Activated CD4-positive, alpha-beta T cell treated with anti-CD3 and anti-CD28 coated beads, Interleukin-2, amount 10 ng/mL, durations not matched to agents 24 days and 14 days (primary cell): ENCODE measurements at regions of chr3 and their contacts with region 1.

Region 1: DNA sequence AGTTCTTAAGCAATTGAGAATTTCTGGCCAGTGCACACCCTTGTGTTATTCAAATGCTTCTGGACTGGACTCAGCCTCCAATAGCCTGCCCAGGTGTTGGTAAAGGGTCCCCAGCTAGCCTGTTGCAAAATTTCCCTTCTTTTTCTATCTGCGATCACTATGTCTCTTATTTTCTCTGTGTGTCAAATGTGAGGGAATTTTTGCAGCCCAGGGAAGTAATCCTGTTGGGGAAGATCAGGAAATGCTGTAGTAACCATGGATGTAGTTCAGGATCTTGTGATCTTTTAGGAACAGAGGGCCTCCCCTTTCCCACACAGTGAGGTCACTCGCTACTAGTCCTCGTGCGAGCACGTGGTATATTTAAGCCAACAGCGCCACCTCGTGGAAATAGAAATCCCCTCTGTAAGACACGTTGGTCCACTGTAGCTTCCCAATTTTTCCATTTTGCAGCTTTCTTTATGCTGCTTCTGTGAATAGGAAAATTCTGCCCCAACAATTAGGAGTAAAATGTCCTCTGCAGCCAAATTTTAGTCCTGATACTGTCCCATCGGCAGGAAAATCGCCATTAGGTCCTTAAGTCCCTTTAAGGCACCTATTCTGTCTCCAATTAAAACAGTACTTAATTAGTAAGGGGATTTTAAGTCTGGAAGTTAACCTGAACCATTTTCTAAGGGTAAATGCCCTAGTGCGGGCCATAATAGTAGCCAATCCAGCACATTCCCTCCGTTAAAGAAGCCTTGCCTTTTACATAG is 4.0 kb upstream of the SMCO1 start:
- DNase-seq: peak; percentile 89
- H3K4me3 Mint-ChIP-seq: no peak overlapping the region
- H3K27ac Mint-ChIP-seq: no peak overlapping the region
- H3K4me1 Mint-ChIP-seq: peaks cover 2% of the 10 kb centered on the region
- H3K27me3 Mint-ChIP-seq: peaks cover 1% of the 10 kb centered on the region

Region 2: DNA sequence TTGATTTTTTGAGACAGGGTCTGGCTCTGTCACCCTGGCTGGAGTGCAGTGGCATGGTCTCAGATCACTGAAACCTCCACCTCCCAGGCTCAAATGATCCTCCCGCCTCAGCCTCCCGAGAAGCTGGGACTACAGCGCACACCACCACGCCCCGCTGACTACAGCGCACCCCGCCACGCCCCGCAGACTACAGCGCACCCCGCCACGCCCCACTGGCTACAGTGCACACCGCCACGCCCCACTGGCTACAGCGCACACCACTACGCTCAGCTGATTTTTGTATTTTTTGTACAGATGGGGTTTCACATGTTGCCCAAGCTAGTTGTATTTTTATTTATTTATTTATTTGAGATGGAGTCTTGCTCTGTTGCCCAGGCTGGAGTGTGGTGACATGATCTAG is 267.2 kb before region 1 on chr3:
- intact Hi-C with region 1: loop called (anchors 1 kb)
- DNase-seq: no peak
- H3K4me3 Mint-ChIP-seq: no peak overlapping the region
- H3K27ac Mint-ChIP-seq: no peak overlapping the region
- H3K4me1 Mint-ChIP-seq: peaks cover 4% of the 10 kb centered on the region
- H3K27me3 Mint-ChIP-seq: no peaks in the 10 kb centered on the region

Region 3: GRCh38 chr3:196317687-196318467 is 201.3 kb before region 1 on chr3 and contains the start of gene DYNLT2B:
- intact Hi-C with region 1: loop called (anchors 5 kb)
- DNase-seq: peak; percentile 97
- H3K4me3 Mint-ChIP-seq: peak within 1 kb of the TSS; percentile 95
- H3K27ac Mint-ChIP-seq: peak within 1 kb of the TSS; percentile 98
- H3K4me1 Mint-ChIP-seq: peaks cover 11% of the 10 kb centered on the region
- H3K27me3 Mint-ChIP-seq: no peaks in the 10 kb centered on the region
- total RNA-seq, gene DYNLT2B: 11.8 and 12.8 TPM in 2 replicates

Region 4: DNA sequence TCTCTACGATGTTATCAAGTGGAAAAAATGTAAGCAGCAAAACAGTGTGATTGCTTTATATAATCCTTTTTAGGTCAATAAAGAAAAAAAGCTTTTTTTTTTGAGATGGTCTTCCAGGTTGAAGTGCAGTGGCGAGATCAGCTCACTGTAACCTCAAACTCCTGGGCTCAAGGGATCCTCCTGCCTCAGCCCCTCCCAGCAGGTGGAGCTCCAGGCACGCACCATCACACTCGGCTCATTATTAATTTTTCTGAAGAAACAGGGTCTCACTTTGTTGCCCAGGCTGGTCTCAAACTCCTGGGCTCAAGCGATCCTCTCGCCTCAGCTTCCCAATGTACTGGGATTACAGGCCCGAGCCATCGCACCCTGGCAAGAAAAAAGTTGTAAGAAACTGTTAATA is 32.9 kb before region 1 on chr3:
- intact Hi-C with region 1: loop called (anchors 1 kb)
- DNase-seq: no peak
- H3K4me3 Mint-ChIP-seq: no peak overlapping the region
- H3K27ac Mint-ChIP-seq: no peak overlapping the region
- H3K4me1 Mint-ChIP-seq: peaks cover 6% of the 10 kb centered on the region
- H3K27me3 Mint-ChIP-seq: no peaks in the 10 kb centered on the region

Region 5: GRCh38 chr3:196665962-196666867 is 147.1 kb after region 1 on chr3:
- intact Hi-C with region 1: no loop called
- DNase-seq: no peak
- H3K4me3 Mint-ChIP-seq: no peak overlapping the region
- H3K27ac Mint-ChIP-seq: no peak overlapping the region
- H3K4me1 Mint-ChIP-seq: peaks cover 11% of the 10 kb centered on the region
- H3K27me3 Mint-ChIP-seq: no peaks in the 10 kb centered on the region